MCF 10A (cell line): ENCODE measurements at regions of chr10 and their contacts with region 1.

Region 1: DNA sequence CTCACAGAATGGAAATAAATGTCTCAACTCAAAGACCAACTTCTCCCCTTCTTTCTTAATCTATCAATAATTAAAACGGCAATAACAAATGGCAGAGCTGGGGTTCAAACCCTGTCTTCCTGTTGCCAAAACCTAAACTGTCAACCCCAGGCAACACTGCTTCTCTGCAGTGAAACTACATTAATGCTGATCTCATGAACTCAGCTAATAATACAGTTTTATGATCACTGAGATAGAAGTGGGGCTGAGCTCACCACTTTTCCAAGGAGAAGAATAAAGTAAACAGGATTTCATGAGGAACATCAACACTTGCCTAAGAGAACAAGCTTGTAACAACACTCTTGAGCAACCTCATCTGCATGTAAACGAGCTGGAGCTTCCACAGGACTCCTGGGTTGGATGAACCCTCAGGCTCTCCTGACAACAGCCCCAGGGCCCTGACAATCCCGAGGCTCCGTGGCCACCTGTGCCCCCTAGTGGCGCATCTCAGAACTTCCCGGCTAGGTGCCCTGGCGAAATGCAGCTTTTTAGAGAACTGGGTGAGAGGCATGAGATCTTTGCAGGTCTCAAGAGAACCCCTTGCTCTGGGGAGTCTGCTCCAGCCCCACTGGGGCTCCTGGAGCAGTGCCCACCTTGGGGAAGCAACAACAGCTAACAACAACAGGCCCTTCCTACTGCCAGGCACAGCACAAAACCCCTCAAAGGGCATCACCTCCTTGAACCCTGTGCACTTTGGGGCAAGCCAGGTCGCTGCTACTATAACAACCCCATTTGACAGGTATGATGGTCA is 169.3 kb downstream of the SH3PXD2A start:
- DNase-seq: peak; percentile 63
- H3K4me3 Mint-ChIP-seq: no peak overlapping the region
- H3K27ac Mint-ChIP-seq: peak overlapping the region; percentile 67
- H3K4me1 Mint-ChIP-seq: peaks cover 6% of the 10 kb centered on the region
- H3K27me3 Mint-ChIP-seq: no peaks in the 10 kb centered on the region
- CTCF ChIP-seq: peak; percentile 87

Region 2: DNA sequence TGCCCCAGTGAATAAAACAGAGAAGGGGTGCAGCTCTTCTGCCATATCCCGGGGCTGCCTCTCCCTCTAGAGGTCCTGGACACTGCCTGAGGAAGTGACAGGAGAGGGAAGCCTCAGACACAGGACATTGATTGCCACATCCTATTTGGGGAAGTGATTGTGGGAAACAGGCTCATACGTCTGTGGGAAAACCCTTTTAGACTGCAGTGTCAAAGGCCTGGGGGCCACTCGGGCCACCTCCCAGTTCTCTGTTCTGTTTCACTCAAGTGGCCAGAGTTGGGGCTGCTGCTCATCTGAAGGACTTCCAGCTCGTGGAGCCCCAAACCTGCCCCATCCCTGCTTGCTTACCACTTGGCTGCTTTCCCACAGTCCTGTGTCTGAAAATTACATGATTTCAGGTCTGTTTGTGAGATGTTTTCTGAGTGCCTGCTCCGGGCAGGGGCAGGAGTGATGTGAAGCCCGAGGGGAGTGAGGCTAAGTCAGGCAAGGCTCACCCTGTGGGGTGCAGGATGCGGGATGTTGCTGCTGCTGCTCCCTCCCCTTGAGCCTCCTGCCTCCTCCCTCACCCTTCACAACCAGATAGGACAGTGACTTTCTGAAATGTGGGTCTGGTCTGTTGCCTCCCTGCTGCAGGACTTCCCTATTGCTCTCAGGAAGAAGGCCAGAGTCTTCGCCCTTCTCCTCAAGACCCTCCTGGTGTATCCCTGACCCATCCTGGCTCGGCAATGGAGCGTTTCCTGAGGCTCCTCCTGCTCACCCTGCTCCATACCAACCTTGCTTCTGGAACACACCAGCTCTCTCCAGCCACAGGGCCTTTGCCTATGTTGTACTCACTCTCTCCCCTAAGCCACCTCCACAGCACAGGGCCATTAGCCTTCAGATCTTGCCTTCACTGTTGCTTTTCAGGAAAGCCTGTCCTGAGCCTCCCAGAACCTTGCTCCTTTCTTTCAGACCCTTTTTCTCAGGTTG is 134.2 kb before region 1 on chr10:
- CTCF ChIA-PET with region 1: no interaction called
- POLR2A ChIA-PET with region 1: no interaction called
- intact Hi-C with region 1: no loop called
- DNase-seq: no peak
- H3K4me3 Mint-ChIP-seq: no peak overlapping the region
- H3K27ac Mint-ChIP-seq: no peak overlapping the region
- H3K4me1 Mint-ChIP-seq: peaks cover 6% of the 10 kb centered on the region
- H3K27me3 Mint-ChIP-seq: peaks cover 11% of the 10 kb centered on the region
- CTCF ChIP-seq: no peak

Region 3: DNA sequence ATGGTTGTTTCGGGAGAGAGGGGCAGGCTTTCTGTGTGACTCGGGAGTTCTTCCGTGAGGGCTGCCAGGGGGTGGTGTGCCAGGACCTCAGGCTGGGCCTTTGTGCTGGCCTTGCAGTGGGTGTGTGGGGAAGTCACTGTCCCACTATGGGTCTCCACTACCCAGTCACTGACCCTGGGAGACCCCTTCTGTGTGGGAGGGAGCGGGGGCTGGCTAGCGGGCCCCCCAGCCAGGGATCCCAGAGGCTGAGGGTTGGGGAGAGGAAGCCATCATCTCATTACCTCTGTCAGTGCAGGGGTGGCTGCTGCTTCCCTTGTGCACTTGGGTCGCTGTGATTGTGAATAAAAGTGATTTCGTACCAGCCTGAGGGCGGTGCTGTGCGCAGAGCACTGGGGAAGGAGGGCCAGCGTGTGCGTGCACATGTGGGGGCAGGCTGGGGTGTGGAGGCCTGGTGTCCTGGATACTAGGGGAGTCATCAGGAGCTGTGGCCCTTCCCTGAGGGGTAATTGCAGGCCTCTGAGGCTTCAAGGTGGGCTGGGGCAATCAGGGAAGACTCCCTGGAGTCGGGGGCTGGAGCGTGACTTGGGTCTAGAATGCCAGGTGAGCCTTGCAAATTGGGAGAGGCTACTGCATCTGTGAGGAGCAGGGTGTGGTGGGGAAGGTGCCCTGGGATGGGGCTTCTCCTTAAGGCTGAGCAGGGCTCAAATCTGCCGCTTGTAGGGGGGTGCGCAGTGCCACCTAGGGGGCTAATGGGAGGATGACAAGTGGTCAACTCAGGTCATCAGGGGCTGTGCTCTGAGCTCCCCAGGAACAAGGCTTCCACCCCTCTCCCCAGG is 93.7 kb before region 1 on chr10:
- CTCF ChIA-PET with region 1: interaction called, 57 read pairs
- POLR2A ChIA-PET with region 1: no interaction called
- intact Hi-C with region 1: no loop called
- DNase-seq: peak; percentile 51
- H3K4me3 Mint-ChIP-seq: no peak overlapping the region
- H3K27ac Mint-ChIP-seq: no peak overlapping the region
- H3K4me1 Mint-ChIP-seq: no peaks in the 10 kb centered on the region
- H3K27me3 Mint-ChIP-seq: no peaks in the 10 kb centered on the region
- CTCF ChIP-seq: peak; percentile 50

Region 4: DNA sequence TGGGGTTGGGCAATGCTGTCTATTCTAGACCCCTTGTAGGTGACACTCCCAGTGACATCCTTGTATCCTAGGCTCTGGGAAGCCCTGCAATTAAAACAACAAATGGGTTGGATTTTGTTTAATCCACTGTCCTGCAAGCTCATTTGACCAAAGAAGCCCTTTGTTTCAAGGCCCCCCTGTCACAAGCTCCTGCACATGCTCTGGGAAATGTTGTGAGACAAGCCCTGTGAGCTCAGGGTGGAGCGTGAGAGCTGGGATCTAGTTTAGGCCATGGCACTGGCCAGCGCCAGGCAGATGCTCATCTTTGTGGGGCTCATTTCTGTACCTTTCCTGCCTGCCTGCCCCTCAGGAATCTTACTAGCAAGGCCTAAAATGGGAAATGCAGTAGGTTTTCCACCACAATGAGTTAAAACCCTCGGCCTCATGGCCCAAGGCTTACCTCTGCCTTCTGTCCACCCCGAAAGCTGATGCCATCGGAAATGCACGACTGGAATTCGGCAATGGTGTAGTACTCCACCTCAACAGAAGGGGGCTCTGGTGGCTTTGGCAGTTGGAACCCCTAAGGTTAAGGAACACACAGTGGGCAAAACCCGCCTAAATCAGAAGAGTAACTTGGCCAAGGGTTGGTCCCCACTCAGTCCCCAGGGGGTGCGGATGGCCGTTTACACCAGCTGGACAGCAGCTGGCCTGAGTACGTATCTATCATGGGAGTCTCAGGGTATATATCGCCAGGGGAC is 80.5 kb before region 1 on chr10:
- CTCF ChIA-PET with region 1: interaction called, 35 read pairs
- POLR2A ChIA-PET with region 1: no interaction called
- intact Hi-C with region 1: no loop called
- DNase-seq: peak; percentile 52
- H3K4me3 Mint-ChIP-seq: no peak overlapping the region
- H3K27ac Mint-ChIP-seq: no peak overlapping the region
- H3K4me1 Mint-ChIP-seq: no peaks in the 10 kb centered on the region
- H3K27me3 Mint-ChIP-seq: no peaks in the 10 kb centered on the region
- CTCF ChIP-seq: peak; percentile 66

Region 5: GRCh38 chr10:103645141-103646054 is 40.7 kb before region 1 on chr10:
- CTCF ChIA-PET with region 1: interaction called, 19 read pairs
- POLR2A ChIA-PET with region 1: no interaction called
- intact Hi-C with region 1: no loop called
- DNase-seq: peak; percentile 81
- H3K4me3 Mint-ChIP-seq: no peak overlapping the region
- H3K27ac Mint-ChIP-seq: no peak overlapping the region
- H3K4me1 Mint-ChIP-seq: peaks cover 5% of the 10 kb centered on the region
- H3K27me3 Mint-ChIP-seq: no peaks in the 10 kb centered on the region
- CTCF ChIP-seq: no peak

Region 6: DNA sequence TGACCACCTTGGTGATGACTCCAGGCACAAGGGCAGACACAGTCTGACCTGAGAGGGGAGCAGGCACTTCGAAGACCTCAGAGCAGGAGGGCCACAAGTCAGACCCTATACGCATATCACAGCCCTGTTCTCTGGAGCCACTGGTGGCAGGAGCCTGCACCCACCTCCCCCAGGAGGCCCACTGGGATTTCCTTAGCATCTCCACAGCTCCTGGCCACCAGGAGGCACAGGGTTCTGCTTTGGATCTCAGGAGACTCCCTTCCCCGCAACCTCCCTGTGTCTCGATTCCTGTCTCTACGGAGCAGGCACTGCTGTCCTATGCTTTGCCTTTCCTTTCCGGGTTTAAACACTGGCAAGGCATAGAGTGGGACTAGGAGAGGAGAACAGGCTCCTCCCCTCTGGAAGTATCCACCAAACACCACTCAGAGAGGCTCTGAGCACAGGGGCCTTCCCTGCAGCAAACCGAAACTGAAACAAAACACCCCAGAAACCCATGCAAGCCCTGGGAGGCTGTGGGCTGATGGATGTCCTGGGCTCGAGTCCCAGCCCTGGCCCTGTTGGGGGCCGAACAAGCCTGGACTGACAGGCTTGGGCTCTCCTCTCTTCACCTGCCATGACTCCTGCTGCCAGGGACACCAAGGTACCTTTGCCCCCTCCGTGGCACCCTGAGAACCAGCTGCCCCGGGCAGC is 26.3 kb before region 1 on chr10:
- CTCF ChIA-PET with region 1: interaction called, 25 read pairs
- POLR2A ChIA-PET with region 1: interaction called, 6 read pairs
- intact Hi-C with region 1: no loop called
- DNase-seq: peak; percentile 57
- H3K4me3 Mint-ChIP-seq: peak overlapping the region; percentile 72
- H3K27ac Mint-ChIP-seq: peak overlapping the region; percentile 61
- H3K4me1 Mint-ChIP-seq: no peaks in the 10 kb centered on the region
- H3K27me3 Mint-ChIP-seq: no peaks in the 10 kb centered on the region
- CTCF ChIP-seq: no peak

Region 7: DNA sequence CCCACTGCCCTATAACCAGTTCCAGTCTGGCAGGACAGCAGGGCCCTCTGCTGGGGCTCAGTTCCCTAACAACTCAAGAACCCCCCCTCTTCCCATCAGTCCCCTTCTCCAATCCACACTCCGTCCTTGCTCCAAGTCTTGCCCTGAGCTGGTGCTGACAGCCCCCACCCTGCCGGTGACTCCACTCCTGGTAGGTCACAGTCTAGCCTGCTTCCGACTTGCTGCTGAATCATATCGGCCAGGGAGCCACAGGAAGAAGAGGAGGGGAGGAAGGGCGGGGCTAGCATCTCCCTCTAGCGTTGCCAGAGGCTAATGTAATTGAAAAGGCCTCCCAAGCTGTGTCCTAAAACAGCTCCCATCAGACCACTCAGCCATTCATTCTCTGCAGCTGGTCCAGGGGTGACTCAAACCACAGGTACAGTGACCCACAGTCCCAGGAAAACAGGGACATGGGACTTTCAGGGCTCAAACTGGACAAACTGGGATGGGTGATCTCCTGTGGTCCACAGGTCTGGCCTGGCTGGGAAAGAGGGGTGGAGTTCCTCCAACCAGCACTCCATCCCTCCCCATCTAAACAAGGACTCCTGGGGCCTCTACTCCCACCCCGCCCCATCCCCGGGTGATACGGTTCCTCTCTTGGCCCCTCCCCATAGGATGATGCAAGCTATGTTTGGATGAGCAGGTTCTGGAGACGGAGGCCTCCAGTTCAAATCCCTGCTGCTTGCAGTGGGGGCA is 10.5 kb after region 1 on chr10:
- CTCF ChIA-PET with region 1: interaction called, 30 read pairs
- POLR2A ChIA-PET with region 1: no interaction called
- intact Hi-C with region 1: no loop called
- DNase-seq: peak; percentile 85
- H3K4me3 Mint-ChIP-seq: no peak overlapping the region
- H3K27ac Mint-ChIP-seq: no peak overlapping the region
- H3K4me1 Mint-ChIP-seq: peaks cover 12% of the 10 kb centered on the region
- H3K27me3 Mint-ChIP-seq: no peaks in the 10 kb centered on the region
- CTCF ChIP-seq: peak; percentile 35

Region 8: GRCh38 chr10:103712570-103713498 is 26.8 kb after region 1 on chr10:
- CTCF ChIA-PET with region 1: interaction called, 12 read pairs
- POLR2A ChIA-PET with region 1: no interaction called
- intact Hi-C with region 1: no loop called
- DNase-seq: peak; percentile 79
- H3K4me3 Mint-ChIP-seq: no peak overlapping the region
- H3K27ac Mint-ChIP-seq: peak overlapping the region; percentile 31
- H3K4me1 Mint-ChIP-seq: peaks cover 29% of the 10 kb centered on the region
- H3K27me3 Mint-ChIP-seq: no peaks in the 10 kb centered on the region
- CTCF ChIP-seq: peak; percentile 93